ENCODE measurements at regions of chr11 and their contacts with region 1.

Region 1: DNA sequence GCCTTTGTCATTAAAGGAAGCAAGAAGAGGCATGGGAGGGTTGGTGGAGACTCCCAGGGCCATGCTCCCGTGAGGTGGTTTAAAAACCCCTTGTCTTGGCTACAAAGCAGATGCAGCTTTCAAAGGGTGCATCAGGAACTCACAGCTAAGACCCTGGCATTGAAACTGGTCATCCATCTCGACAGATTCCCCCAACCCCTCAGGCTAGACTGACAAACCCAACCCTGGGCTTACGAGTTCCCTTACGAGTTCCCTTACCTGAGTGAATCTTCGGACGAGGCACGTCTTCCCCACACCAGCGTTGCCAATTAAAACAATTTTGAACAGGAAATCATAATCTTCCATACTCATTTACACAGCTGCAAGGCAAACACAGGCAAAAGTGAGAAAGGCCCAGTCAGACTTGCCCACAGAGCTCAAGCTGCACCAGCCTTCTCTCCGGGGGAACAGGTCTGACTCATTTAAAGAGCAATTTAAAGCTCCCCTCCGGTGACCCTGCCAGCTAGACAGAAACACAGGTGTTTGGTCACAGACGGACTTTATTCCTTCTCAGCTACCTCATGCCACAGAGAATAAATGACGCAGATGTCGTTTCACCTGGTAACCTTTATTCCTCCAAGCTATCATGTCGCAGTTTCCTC is 74.6 kb downstream of the RAB30 start:
- DNase-seq: peak; percentile 46
- H3K4me3 Mint-ChIP-seq: no peak overlapping the region
- H3K27ac Mint-ChIP-seq: peak overlapping the region; percentile 12
- H3K4me1 Mint-ChIP-seq: peaks cover 78% of the 10 kb centered on the region
- H3K27me3 Mint-ChIP-seq: no peaks in the 10 kb centered on the region

Region 2: GRCh38 chr11:82927254-82927880 is 69.7 kb before region 1 on chr11:
- CTCF ChIA-PET with region 1: interaction called, 3 read pairs
- intact Hi-C with region 1: loop called (anchors 2 kb)
- DNase-seq: peak; percentile 33
- H3K4me3 Mint-ChIP-seq: no peak overlapping the region
- H3K27ac Mint-ChIP-seq: no peak overlapping the region
- H3K4me1 Mint-ChIP-seq: peaks cover 33% of the 10 kb centered on the region
- H3K27me3 Mint-ChIP-seq: no peaks in the 10 kb centered on the region

Region 3: DNA sequence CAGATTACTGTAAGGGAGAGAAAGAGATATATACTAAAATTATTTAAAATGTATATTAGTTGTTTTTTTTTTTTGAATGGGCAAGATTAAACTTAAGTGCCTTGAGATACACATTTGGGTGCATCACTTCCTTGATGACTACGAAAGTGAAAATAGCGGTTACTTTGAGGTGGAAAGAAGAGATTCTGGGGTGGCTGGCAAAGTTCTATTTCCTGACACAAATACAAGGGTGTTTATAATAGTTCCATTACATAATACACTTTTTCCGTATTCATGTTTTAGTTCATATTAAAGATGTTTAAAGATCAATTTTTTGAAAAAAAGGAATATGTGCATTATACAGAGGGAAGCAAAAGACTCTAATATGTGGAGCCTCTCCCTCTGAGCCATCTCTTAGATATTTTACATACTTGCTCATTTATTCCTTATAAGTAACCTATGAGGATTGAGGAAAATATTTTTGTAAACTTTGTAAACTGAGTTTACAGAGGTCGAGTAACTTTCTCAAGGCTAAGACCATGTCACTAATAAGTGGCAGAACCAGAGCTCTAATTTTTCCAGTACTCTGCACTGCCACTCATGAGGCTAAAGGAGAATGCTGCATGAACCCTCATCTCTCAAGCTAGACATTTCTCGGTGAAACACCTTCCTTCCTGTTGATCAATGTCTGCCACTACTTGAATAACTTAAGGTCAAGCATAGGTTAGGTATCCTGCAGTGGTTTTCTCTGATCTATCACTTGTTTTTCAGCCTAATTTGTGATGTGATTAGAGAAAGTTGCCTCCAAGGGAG is 36.9 kb before region 1 on chr11:
- CTCF ChIA-PET with region 1: no interaction called
- intact Hi-C with region 1: loop called (anchors 1 kb)
- DNase-seq: peak; percentile 55
- H3K4me3 Mint-ChIP-seq: peak overlapping the region; percentile 21
- H3K27ac Mint-ChIP-seq: peak overlapping the region; percentile 68
- H3K4me1 Mint-ChIP-seq: peaks cover 82% of the 10 kb centered on the region
- H3K27me3 Mint-ChIP-seq: no peaks in the 10 kb centered on the region

Region 4: GRCh38 chr11:82978422-82979099 is 18.5 kb before region 1 on chr11:
- CTCF ChIA-PET with region 1: interaction called, 5 read pairs
- intact Hi-C with region 1: loop called (anchors 1 kb)
- DNase-seq: no peak
- H3K4me3 Mint-ChIP-seq: peak overlapping the region; percentile 0
- H3K27ac Mint-ChIP-seq: peak overlapping the region; percentile 33
- H3K4me1 Mint-ChIP-seq: peaks cover 51% of the 10 kb centered on the region
- H3K27me3 Mint-ChIP-seq: no peaks in the 10 kb centered on the region

Region 5: DNA sequence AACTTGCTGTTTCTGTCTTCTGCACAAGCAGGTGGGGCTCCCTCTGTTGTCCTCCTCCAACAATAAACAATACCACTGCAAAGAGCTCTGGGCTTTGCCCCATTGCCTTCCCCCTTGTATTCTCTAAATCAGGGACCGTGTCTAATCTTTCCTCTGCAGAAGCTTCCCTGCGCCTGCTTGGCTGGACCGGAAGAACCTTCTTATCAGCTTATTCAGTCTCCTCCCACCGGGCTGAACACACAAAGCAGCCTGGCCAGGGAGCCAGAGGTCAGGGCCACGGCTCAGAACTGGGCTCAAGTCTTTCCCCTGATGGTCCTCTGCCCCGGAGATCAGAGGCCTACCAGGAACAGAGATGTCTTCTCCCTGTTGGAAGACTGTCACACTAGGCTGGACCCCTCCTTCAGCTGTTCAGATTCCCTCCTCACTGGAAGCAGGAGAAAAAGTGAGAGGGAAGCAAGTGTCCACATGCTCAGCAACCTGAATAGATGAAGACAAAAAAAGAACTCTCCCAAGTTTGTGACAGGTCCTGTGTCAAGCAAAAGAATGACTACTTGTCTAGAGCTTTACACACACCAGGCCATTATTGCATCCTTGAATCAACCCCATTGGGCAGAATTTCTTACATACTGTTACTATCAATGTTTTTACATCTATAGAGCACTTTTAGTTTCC is 11.0 kb after region 1 on chr11:
- CTCF ChIA-PET with region 1: interaction called, 5 read pairs
- intact Hi-C with region 1: loop called (anchors 1 kb)
- DNase-seq: no peak
- H3K4me3 Mint-ChIP-seq: no peak overlapping the region
- H3K27ac Mint-ChIP-seq: no peak overlapping the region
- H3K4me1 Mint-ChIP-seq: peaks cover 50% of the 10 kb centered on the region
- H3K27me3 Mint-ChIP-seq: no peaks in the 10 kb centered on the region

Region 6: DNA sequence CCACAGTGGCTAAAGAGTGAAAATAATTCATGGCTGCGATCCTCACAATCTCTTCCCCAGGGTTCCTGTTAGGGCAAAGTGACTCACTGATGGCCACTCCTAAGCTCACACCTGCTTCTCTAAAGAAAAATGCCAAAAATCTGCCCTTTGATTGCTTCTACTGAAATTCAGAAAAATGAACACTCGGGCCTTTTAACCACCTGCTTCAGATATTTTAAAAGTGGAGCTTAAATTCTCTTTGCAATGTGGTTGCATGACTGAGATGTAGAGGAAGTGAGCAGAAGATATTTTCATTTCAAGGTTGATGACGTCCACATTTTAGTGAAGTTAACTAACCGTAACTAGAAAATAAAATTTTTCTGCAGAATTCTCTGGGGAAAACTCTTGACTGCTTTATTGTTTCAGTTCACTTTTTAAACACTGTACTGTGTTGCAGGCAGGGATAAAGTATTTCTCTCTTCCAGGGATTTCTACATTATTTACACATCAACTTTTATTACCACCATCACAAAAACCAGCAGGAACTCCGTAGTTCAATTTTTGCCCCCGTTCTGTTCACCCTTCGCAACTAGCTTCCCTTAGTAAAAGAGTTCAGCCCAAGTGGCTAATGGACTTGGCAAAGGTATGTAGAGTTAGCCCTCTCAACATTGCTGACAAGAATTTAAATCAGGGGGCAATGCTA is 66.1 kb after region 1 on chr11:
- CTCF ChIA-PET with region 1: no interaction called
- intact Hi-C with region 1: loop called (anchors 2 kb)
- DNase-seq: no peak
- H3K4me3 Mint-ChIP-seq: peak overlapping the region; percentile 78
- H3K27ac Mint-ChIP-seq: peak overlapping the region; percentile 93
- H3K4me1 Mint-ChIP-seq: peaks cover 64% of the 10 kb centered on the region
- H3K27me3 Mint-ChIP-seq: no peaks in the 10 kb centered on the region

Region 7: DNA sequence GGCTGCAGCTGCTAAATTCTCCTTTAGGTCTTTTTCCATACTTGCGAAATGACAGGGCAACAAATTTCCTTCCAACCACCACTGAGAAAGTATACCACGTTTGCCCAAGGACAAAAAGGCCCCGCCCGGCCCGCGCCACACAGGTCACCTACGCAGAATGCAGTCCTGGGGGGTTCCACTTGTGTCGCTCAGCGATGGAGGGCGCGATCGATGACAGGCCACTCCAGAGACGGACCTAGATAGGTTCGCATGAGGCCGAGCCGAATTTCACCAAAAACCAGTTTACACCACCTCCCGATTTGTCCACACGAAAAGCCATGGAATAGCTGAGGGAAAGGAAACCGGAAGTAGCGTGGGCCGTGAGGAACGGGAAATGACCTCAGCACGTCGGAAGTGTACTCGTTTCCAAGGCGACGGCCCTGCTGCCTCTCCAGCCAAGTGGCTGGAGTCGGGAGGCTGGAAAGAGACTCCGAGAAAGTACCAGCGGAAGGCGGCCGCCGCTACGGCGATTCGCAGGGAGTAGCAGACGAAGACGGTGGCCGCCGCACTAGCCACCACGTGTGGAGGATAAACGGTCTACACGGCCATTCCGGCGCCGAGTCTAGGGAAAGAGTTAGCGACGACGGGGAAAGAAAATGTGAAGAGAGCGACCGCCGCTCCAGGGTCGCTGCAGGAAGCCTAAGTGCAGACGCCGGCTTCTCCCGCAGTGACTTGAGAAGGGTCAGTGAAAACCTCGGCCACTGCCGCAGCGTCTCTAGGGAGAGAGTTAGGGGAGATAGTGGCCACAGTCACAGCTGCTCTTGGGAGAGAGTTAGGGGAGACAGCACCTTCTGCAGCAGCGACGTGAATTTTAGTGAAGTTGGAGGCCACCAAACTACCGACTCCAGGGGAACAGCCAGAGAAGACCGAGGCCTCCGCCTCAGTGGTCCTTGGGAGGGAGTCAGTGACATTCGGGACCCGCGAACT is 196.5 kb after region 1 on chr11 and contains the start of gene ANKRD42:
- CTCF ChIA-PET with region 1: no interaction called
- intact Hi-C with region 1: loop called (anchors 1 kb)
- DNase-seq: peak; percentile 90
- H3K4me3 Mint-ChIP-seq: peak within 1 kb of the TSS; percentile 95
- H3K27ac Mint-ChIP-seq: peak within 1 kb of the TSS; percentile 95
- H3K4me1 Mint-ChIP-seq: peaks cover 44% of the 10 kb centered on the region
- H3K27me3 Mint-ChIP-seq: no peaks in the 10 kb centered on the region
- total RNA-seq, gene ANKRD42: 2.3 to 2.7 TPM